Mammary epithelial cell (primary cell): ENCODE measurements at regions of chr16 and their contacts with region 1.

Region 1: DNA sequence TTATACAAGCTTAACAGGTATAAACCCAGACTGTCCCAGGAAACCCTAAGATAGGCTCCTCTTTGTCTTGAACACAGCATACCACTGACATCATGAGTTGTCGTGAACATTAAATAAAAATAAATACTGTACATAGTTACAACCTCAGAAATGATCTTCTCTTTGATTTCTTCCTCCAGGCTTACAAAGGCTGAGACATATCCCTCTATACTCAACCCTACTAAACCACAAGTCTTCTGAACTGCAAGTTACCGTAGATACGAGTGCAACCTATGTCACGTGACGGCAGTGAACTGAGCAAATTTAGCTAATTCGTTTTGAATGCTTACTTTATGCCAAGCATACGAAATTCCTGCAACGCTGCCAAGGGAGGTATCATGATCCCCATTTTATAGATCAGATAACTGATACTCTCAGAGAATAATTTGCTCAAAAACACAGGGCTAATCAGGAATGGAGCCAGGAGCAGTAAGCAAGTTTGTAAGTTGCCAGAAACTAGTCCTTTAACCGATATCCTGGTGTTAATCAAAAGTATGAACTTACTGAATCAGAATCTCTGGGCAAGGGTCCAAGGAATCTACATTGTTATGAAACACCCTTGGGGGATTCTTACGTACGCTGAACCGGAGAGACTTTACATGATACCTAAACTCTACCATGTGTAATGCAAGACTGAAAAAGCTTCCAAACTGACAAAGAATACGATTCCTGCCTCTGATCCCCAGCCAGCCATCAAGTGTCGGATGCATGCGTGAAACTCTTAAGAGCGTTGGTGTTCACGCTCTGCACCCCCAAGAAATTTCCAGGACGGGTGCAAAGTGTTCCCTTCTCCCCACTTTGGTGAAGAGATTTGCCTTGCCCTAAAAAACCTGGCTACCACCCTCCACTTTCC is 106.2 kb downstream of the XYLT1 start:
- DNase-seq: peak; percentile 72
- H3K4me3 ChIP-seq: no peak overlapping the region
- H3K27ac ChIP-seq: peak overlapping the region; percentile 37
- H3K4me1 ChIP-seq: peaks cover 12% of the 10 kb centered on the region
- H3K27me3 ChIP-seq: no peaks in the 10 kb centered on the region
- CTCF ChIP-seq: no peak

Region 2: GRCh38 chr16:17211797-17212196 is 152.8 kb before region 1 on chr16:
- CTCF ChIA-PET with region 1: no interaction called
- dilution Hi-C with region 1: loop called (anchors 10 kb)
- in situ Hi-C with region 1: no loop called
- intact Hi-C with region 1: no loop called
- DNase-seq: no peak
- H3K4me3 ChIP-seq: no peak overlapping the region
- H3K27ac ChIP-seq: no peak overlapping the region
- H3K4me1 ChIP-seq: no peaks in the 10 kb centered on the region
- H3K27me3 ChIP-seq: no peaks in the 10 kb centered on the region
- CTCF ChIP-seq: peak; percentile 33 to 44

Region 3: GRCh38 chr16:17318238-17318637 is 46.3 kb before region 1 on chr16:
- CTCF ChIA-PET with region 1: no interaction called
- dilution Hi-C with region 1: loop called (anchors 5 kb)
- in situ Hi-C with region 1: no loop called
- intact Hi-C with region 1: no loop called
- DNase-seq: no peak
- H3K4me3 ChIP-seq: no peak overlapping the region
- H3K27ac ChIP-seq: no peak overlapping the region
- H3K4me1 ChIP-seq: peaks cover 5% of the 10 kb centered on the region
- H3K27me3 ChIP-seq: no peaks in the 10 kb centered on the region
- CTCF ChIP-seq: no peak